ENCODE measurements at regions of chr18 and their contacts with region 1.

Region 1: DNA sequence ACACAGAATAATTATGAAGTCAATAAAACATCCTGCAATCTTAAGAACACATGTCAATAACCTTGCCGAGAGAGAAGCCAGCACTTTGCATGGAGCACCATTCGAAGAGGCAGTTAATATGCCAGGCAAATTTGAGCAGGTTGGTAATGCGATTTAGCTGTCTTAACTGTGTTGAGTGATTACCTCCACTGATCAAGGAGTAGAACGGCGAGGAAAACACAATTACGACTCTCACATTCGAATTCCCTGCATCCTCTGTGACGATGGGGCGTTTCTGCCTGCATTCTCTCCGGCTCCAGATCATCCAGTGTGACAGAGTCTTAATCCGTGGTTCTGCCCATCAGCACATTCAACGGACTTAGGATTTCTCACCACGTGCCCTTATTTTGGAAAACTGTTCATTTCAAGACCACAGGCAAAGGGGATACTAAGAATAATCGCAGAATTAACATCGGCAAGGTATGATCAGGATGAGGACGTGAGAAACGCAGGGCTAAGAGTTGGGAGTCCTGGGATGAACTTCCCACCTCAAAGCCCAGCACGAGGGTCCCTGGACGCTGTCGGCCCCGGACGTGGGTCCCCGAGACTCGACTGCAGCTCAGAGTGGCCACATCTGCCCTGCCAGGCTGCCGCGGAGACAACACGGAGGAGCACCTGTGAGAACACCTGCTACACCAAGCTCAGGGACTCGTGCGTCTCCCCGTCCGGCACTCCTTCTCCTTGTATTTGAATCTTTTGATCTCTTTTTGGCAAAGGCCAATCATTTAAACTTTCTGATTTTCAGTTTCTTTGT is 499.2 kb upstream of the SALL3 start:
- DNase-seq: no peak
- ATAC-seq: no peak
- H3K4me3 ChIP-seq: no peak overlapping the region
- H3K27ac ChIP-seq: no peak overlapping the region
- H3K4me1 ChIP-seq: no peaks in the 10 kb centered on the region
- H3K27me3 ChIP-seq: peaks cover 8% of the 10 kb centered on the region; the same call in 1 of the 2 replicates
- CTCF ChIP-seq: no peak

Region 2: GRCh38 chr18:78423811-78424210 is 56.6 kb before region 1 on chr18:
- CTCF ChIA-PET with region 1: no interaction called
- POLR2A ChIA-PET with region 1: no interaction called
- in situ Hi-C with region 1: no loop called
- intact Hi-C with region 1: no loop called
- DNase-seq: no peak
- ATAC-seq: no peak
- H3K4me3 ChIP-seq: no peak overlapping the region
- H3K27ac ChIP-seq: no peak overlapping the region
- H3K4me1 ChIP-seq: no peaks in the 10 kb centered on the region
- H3K27me3 ChIP-seq: peaks cover 18% of the 10 kb centered on the region; the same call in 1 of the 2 replicates
- CTCF ChIP-seq: no peak

Region 3: GRCh38 chr18:78436110-78436509 is 44.3 kb before region 1 on chr18:
- CTCF ChIA-PET with region 1: no interaction called
- POLR2A ChIA-PET with region 1: no interaction called
- in situ Hi-C with region 1: no loop called
- intact Hi-C with region 1: no loop called
- DNase-seq: no peak
- ATAC-seq: no peak
- H3K4me3 ChIP-seq: no peak overlapping the region
- H3K27ac ChIP-seq: no peak overlapping the region
- H3K4me1 ChIP-seq: no peaks in the 10 kb centered on the region
- H3K27me3 ChIP-seq: no peaks in the 10 kb centered on the region; the same call in none of the 2 replicates
- CTCF ChIP-seq: no peak

Region 4: GRCh38 chr18:78957140-78957539 is 476.7 kb after region 1 on chr18:
- CTCF ChIA-PET with region 1: no interaction called
- POLR2A ChIA-PET with region 1: interaction called, 12 read pairs
- in situ Hi-C with region 1: no loop called
- intact Hi-C with region 1: no loop called
- DNase-seq: no peak
- ATAC-seq: no peak
- H3K4me3 ChIP-seq: no peak overlapping the region
- H3K27ac ChIP-seq: no peak overlapping the region
- H3K4me1 ChIP-seq: no peaks in the 10 kb centered on the region
- H3K27me3 ChIP-seq: no peaks in the 10 kb centered on the region
- CTCF ChIP-seq: no peak